ENCODE measurements at regions of chr1 and their contacts with region 1.

Region 1: DNA sequence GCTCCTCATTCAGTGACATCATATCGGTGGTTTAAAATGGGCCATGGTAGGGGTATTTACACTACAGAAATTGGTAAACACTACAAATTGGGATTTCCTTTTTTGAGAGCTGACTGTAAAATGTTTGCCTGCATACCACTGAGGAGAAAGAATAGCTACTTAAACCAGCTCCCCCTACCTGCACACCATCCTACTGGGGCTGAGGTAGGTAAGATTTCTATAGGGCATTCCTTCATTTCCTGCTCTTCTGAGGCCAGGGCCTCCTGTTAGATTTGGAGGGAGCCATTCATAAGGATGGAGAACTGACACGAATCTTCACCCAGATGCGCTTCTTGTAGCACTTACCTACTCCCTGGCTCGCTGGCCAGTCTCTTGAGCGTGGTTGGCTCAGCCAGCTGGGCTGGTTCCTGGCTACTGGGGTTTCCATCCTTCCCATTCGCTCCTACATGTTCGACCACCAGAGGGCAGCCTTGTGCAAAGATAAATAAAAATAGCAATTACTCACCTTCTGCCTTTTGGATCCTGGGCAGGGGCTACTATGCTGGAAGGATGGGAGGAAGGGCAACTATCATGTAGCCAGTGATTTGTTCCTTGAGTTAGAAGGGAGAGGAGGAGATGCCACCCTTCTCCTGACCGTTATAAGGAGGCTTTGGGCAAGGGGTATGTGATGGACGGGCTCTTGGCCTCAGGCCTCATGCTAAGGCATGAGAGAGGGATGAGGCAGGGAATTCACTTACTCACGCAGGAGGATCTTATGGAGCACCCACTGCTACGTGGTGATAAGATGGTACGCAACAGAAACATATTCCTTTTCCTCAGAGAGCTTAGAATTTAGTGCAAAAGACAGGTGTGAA is 10.7 kb downstream of the OPTC start:
- DNase-seq: no peak
- H3K4me3 ChIP-seq: no peak overlapping the region
- CTCF ChIP-seq: peak; percentile 71

Region 2: GRCh38 chr1:203101915-203102634 is 402.5 kb before region 1 on chr1:
- CTCF ChIA-PET with region 1: no interaction called
- POLR2A ChIA-PET with region 1: no interaction called
- DNase-seq: no peak
- H3K4me3 ChIP-seq: no peak overlapping the region
- CTCF ChIP-seq: no peak

Region 3: GRCh38 chr1:203440771-203441170 is 63.9 kb before region 1 on chr1:
- CTCF ChIA-PET with region 1: no interaction called
- POLR2A ChIA-PET with region 1: no interaction called
- DNase-seq: peak; percentile 37
- H3K4me3 ChIP-seq: no peak overlapping the region
- CTCF ChIP-seq: peak; percentile 73

Region 4: GRCh38 chr1:203486618-203487370 is 17.8 kb before region 1 on chr1:
- CTCF ChIA-PET with region 1: interaction called, 30 read pairs
- POLR2A ChIA-PET with region 1: no interaction called
- DNase-seq: no peak
- H3K4me3 ChIP-seq: no peak overlapping the region
- CTCF ChIP-seq: no peak

Region 5: GRCh38 chr1:203526572-203526971 is 21.9 kb after region 1 on chr1:
- CTCF ChIA-PET with region 1: interaction called, 10 read pairs
- POLR2A ChIA-PET with region 1: no interaction called
- DNase-seq: no peak
- H3K4me3 ChIP-seq: no peak overlapping the region
- CTCF ChIP-seq: no peak

Region 6: DNA sequence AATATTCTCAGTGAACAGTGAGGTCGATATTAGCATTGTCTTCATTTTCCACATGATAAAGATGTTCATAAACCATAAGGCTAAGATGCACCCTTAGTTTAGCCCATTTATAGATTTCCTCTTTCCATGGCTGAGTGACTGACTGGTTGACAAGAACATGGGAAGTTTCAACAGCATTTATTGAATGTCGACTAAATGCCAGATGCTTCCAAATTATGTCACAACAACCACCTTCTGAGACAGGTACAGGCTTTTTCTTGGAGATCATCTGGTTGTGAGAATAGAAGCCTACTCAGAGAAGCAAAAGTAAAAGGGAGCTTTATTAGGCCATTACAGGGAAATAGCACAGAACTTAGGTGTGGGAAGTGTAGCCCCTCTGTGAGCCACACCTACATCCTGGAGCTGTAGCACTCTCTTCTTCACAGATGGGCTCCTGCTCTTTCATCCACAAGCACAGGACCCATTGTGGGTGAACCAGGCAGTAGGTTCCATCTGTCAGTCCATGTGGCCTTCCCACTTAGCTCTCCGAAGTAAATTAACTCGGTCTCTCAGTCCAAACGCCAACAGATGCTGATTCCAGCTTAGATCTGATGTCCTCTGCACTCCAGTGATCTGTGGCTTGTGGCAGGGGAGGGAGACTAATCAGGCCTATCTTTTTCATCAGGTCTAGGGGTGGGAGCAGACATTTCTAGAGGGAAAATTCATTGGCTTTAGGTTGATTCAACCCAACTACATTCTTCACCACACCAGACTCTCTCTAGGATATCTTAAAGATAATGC is 136.3 kb after region 1 on chr1:
- CTCF ChIA-PET with region 1: interaction called, 13 read pairs
- POLR2A ChIA-PET with region 1: no interaction called
- DNase-seq: no peak
- H3K4me3 ChIP-seq: no peak overlapping the region
- CTCF ChIP-seq: no peak

Region 7: GRCh38 chr1:203673550-203674427 is 169.2 kb after region 1 on chr1:
- CTCF ChIA-PET with region 1: interaction called, 11 read pairs
- POLR2A ChIA-PET with region 1: no interaction called
- DNase-seq: peak; percentile 59
- H3K4me3 ChIP-seq: no peak overlapping the region; the same call in none of the 2 replicates
- CTCF ChIP-seq: peak; percentile 18

Region 8: DNA sequence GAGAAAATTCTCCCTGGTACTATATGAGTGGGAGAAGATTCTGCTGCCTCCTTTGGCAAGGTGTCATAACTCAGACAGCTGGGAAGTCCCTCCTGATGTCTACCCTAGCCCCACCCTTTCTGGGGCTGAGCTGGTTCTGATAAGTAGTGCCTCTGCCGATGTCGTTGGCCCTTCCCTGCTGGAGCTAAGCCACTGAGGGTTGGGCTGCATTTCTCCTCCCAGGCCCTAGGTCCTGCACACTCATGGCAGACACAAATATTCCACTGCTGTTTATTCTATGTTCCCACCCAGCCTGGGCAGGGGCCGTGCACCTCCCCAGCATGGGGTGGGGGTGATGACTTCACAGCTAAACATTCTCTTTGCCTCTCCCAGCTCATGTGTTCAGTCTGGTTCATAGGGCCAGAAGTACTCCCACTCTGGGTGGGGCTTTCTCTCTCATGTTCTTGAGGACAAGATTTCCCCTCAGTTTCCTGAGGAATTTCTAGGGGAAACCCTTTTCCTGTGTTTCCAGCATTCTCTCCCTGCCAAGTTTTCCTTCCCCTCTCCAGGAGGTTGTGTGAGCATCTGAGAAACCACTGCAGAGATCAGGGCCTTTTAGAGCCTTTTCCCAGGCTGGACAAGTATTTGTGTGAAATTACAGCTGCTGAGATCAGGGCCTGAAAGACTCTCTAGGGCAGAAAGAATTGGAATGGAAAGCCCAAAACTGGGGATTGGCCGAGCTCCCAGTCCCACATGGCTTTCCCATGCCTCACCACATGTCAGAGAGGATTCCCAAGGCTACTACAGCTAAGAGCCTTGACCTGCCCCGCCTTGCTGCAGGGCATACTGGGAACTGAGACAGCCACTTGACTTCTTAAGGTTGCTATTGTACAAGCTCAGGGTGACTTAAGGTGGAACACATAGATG is 188.2 kb after region 1 on chr1:
- CTCF ChIA-PET with region 1: interaction called, 74 read pairs
- POLR2A ChIA-PET with region 1: interaction called, 5 read pairs
- DNase-seq: peak; percentile 84
- H3K4me3 ChIP-seq: no peak overlapping the region
- CTCF ChIP-seq: no peak

Region 9: DNA sequence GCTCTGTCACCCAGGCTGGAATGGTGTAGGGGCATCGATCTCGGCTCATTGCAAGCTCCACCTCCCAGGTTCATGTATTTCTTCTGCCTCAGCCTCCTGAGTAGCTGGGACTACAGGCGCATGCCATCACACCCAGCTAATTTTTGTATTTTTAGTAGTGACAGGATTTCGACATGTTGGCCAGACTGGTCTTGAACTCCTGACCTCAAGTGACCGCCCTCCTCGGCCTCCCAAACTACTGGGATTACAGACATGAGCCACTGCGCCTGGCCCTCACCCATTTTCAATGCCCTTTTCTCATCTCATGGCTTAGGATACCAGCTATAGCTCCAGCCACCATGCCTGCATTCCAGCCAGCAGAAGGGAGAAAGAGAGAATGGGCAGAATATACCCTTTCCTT is 555.3 kb after region 1 on chr1:
- CTCF ChIA-PET with region 1: no interaction called
- POLR2A ChIA-PET with region 1: no interaction called
- DNase-seq: no peak
- H3K4me3 ChIP-seq: no peak overlapping the region
- CTCF ChIP-seq: no peak